Caco-2 (cell line): ENCODE measurements at regions of chr7 and their contacts with region 1.

Region 1: DNA sequence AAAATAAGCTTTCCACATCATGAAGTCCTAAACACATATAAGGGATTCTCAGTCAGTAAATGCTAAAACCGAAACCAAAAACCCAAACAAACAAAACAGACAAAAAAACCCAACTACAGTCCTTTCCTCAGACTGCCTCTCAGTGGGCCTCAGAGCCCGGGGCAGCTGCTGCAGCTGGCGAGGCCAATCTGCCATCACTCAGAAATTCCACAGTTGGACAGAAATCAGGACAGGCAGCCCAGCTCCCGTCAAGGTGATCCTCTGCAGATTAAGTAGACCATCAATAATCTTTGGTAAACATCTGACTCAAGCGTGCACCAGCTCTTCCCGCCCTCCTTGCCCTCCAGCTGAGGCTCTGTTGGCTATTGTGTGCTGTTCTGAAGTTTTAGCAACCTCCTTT is 142.2 kb downstream of the ATXN7L1 start:
- DNase-seq: peak in 1 of 2 experiments; percentile 42
- H3K4me3 ChIP-seq: no peak overlapping the region
- H3K4me3 Mint-ChIP-seq: no peak overlapping the region
- H3K27ac Mint-ChIP-seq: no peak overlapping the region
- H3K4me1 ChIP-seq: 0 out of 2 replicates have a peak, but pooled peaks cover 3% of the 10 kb centered on the region
- H3K4me1 Mint-ChIP-seq: peaks cover 12% of the 10 kb centered on the region
- H3K27me3 ChIP-seq: no peaks in the 10 kb centered on the region
- H3K27me3 Mint-ChIP-seq: no peaks in the 10 kb centered on the region
- CTCF ChIP-seq: no peak

Region 2: GRCh38 chr7:105719919-105720318 is 14.3 kb before region 1 on chr7:
- CTCF ChIA-PET with region 1: interaction called, 4 read pairs
- POLR2A ChIA-PET with region 1: no interaction called
- intact Hi-C with region 1: loop called (anchors 1 kb)
- DNase-seq: no peak
- H3K4me3 ChIP-seq: no peak overlapping the region
- H3K4me3 Mint-ChIP-seq: no peak overlapping the region
- H3K27ac Mint-ChIP-seq: no peak overlapping the region
- H3K4me1 ChIP-seq: no peaks in the 10 kb centered on the region
- H3K4me1 Mint-ChIP-seq: peaks cover 7% of the 10 kb centered on the region
- H3K27me3 ChIP-seq: no peaks in the 10 kb centered on the region
- H3K27me3 Mint-ChIP-seq: no peaks in the 10 kb centered on the region
- CTCF ChIP-seq: no peak